CD14-positive monocyte (primary cell): ENCODE measurements at regions of chr14 and their contacts with region 1.

Region 1: GRCh38 chr14:20413045-20413799 is at the start of gene TEP1:
- DNase-seq: peak; percentile 45 to 61 (median 52)
- H3K4me3 ChIP-seq: peak within 1 kb of the TSS; percentile 82 to 95 (median 86)
- H3K4me3 Mint-ChIP-seq: peak within 1 kb of the TSS; percentile 97 to 98
- H3K27ac ChIP-seq: peak within 1 kb of the TSS; percentile 73 to 82
- H3K27ac Mint-ChIP-seq: peak within 1 kb of the TSS; percentile 83 to 97 (median 92)
- H3K4me1 ChIP-seq: peaks cover 29 to 35% of the 10 kb centered on the region in 2 donors
- H3K4me1 Mint-ChIP-seq: peaks cover 50% of the 10 kb centered on the region
- H3K27me3 ChIP-seq: no peaks in the 10 kb centered on the region
- H3K27me3 Mint-ChIP-seq: peaks cover 0 to 1% (median 0%) of the 10 kb centered on the region in 3 donors
- CTCF ChIP-seq: no peak
- polyA plus RNA-seq, gene TEP1: 2.3 to 78.9 (median 7.1) TPM

Region 2: GRCh38 chr14:20317720-20318119 is 95.5 kb before region 1 on chr14:
- intact Hi-C with region 1: no loop called
- DNase-seq: no peak
- H3K4me3 ChIP-seq: no peak overlapping the region
- H3K4me3 Mint-ChIP-seq: no peak overlapping the region
- H3K27ac ChIP-seq: no peak overlapping the region
- H3K27ac Mint-ChIP-seq: peak overlapping the region in 1 of 7 donors; percentile 62
- H3K4me1 ChIP-seq: no peaks in the 10 kb centered on the region
- H3K4me1 Mint-ChIP-seq: no peaks in the 10 kb centered on the region
- H3K27me3 ChIP-seq: no peaks in the 10 kb centered on the region
- H3K27me3 Mint-ChIP-seq: no peaks in the 10 kb centered on the region
- CTCF ChIP-seq: no peak

Region 3: GRCh38 chr14:20461274-20462001 is 48.2 kb after region 1 on chr14 and contains the start of gene PIP4P1:
- intact Hi-C with region 1: loop called in 1 of 2 experiments (anchors 10 kb)
- DNase-seq: peak; percentile 100
- H3K4me3 ChIP-seq: peak within 1 kb of the TSS; percentile 71 to 86 (median 73)
- H3K4me3 Mint-ChIP-seq: peak within 1 kb of the TSS; percentile 93 to 96
- H3K27ac ChIP-seq: peak within 1 kb of the TSS; percentile 77 to 93
- H3K27ac Mint-ChIP-seq: peak within 1 kb of the TSS; percentile 92 to 98 (median 97)
- H3K4me1 ChIP-seq: peaks cover 47 to 54% of the 10 kb centered on the region in 2 donors
- H3K4me1 Mint-ChIP-seq: peaks cover 13% of the 10 kb centered on the region
- H3K27me3 ChIP-seq: no peaks in the 10 kb centered on the region
- H3K27me3 Mint-ChIP-seq: peaks cover 1 to 5% (median 1%) of the 10 kb centered on the region in 3 donors
- CTCF ChIP-seq: no peak
- polyA plus RNA-seq, gene PIP4P1: 19.4 to 106 (median 21.2) TPM